ENCODE measurements at regions of chr1 and their contacts with region 1.

Region 1: GRCh38 chr1:37890378-37891014 is 31.1 kb upstream of the MTF1 start:
- DNase-seq: no peak
- ATAC-seq: no peak
- H3K4me3 ChIP-seq: no peak overlapping the region
- H3K27ac ChIP-seq: no peak overlapping the region
- H3K4me1 ChIP-seq: no peaks in the 10 kb centered on the region
- H3K27me3 ChIP-seq: no peaks in the 10 kb centered on the region

Region 2: DNA sequence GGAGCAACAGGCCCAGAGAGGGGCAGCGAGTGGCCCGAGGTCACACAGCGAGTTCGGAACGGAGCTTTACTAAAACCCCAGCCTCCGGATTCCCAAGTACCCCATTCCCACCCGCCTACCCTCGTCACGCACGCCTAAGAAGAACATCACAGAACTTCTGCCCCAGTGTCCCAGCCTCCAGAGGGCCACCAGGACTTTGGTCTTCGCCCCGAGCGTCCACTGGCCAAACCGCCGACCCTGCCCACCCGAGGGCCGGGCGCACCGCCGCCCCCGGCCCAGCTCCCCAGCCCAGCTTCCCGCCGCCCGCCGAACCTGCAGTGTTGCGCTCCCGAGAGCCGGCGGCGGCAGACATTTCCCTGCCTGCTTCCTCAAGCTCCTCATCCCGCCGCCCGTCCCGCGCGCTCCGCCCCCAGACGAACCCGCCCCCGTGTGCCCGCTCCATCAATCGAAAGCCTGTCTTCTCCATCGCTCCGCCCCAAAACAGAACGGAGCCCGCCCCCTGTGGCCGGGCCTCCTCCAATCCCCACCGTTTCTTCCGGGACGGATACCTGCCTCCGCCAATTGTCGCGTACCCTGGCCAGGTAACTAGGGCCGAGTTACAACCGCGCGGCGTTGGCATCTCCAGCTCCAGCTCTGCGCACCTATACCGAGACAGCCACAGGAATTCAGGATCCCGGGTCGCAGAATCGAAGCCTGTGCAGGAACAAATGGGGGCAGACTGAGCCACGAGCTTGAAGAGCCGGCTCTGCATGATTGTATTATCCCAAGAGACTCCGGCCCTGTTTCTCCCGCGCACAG is 41.1 kb after region 1 on chr1:
- intact Hi-C with region 1: loop called in 1 of 2 experiments (anchors 5 kb)
- DNase-seq: peak; percentile 98 to 99
- ATAC-seq: peak; percentile 98
- H3K4me3 ChIP-seq: peak overlapping the region; percentile 30 to 60
- H3K27ac ChIP-seq: no peak overlapping the region
- H3K4me1 ChIP-seq: no peaks in the 10 kb centered on the region
- H3K27me3 ChIP-seq: no peaks in the 10 kb centered on the region

Region 3: DNA sequence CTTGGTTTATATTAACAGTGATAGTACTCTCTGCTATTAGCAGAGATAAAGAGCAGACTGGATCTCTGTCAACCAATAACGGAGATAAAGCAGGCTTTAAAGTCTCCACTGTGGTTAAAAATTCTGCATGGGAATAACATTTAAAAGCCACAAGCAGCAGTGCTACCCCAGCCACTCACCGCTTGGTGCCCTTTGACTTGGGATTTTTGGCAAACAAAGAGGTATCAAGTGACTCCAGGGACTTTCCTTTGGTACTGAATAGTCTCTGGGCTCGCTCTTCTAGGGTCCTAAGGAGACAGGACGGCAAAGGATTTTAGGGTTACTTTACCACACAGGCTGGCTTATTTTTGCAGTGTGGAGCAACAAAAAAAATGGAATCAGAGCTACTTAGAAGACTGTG is 88.0 kb after region 1 on chr1:
- intact Hi-C with region 1: loop called (anchors 2 to 5 kb)
- DNase-seq: no peak
- ATAC-seq: no peak
- H3K4me3 ChIP-seq: no peak overlapping the region
- H3K27ac ChIP-seq: no peak overlapping the region
- H3K4me1 ChIP-seq: no peaks in the 10 kb centered on the region
- H3K27me3 ChIP-seq: no peaks in the 10 kb centered on the region

Measured in aorta (tissue), 5 donors.